ENCODE measurements at regions of chr17 and their contacts with region 1.

Region 1: GRCh38 chr17:1628856-1629646 is 417 bp upstream of the SLC43A2 start:
- DNase-seq: peak; percentile 95
- H3K4me3 Mint-ChIP-seq: peak overlapping the region; percentile 97
- H3K27ac Mint-ChIP-seq: peak overlapping the region; percentile 93
- H3K4me1 Mint-ChIP-seq: peaks cover 25% of the 10 kb centered on the region
- H3K27me3 Mint-ChIP-seq: peaks cover 43% of the 10 kb centered on the region

Region 2: DNA sequence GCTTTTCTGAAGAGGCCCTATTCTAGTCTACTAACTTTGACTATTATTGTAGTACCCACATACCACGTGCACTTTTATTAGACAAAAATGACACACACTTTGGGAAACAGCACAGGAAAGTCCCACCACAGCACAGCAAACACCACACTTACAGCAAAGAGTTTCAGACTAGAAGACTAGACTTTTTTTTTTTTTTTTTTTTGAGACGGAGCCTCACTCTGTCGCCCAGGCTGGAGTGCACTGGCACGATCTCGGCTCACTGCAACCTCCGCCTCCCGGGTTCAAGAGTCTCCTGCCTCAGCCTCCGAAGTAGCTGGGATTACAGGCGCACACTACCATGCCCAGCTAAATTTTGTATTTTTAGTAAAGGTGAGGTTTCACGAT is 249.1 kb before region 1 on chr17:
- intact Hi-C with region 1: loop called (anchors 10 kb)
- DNase-seq: no peak
- H3K4me3 Mint-ChIP-seq: peak overlapping the region; percentile 28
- H3K27ac Mint-ChIP-seq: peak overlapping the region; percentile 46
- H3K4me1 Mint-ChIP-seq: peaks cover 59% of the 10 kb centered on the region
- H3K27me3 Mint-ChIP-seq: no peaks in the 10 kb centered on the region

Region 3: DNA sequence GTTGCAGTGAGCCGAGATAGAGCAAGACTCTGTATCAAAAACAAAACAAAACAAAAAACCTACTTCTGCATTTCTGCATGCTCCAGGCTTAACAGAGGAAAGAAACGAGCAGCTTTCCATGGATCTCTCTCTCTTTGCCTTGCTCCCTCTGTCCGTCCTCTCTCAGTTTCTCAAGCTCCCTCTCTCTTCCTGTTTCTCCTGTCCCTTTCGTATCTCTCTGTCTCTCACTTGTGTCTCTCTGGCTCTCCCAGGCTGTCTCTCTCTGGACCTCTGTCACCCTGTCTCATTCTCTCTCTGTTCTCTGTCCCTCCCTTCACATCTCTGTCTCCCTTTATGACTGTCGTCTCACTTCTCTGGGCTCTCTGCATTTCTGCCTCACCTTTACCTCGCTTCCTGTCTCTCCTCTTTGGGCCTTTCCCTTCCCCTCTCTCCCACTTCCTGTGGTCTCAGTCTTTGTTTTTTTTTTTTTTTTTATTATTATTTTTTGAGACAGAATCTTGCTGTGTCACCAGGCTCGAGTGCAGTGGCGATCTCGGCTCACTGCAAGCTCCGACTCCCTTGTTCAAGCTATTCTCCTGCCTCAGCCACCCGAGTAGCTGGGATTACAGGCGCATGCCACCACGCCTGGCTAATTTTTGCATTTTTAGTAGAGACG is 62.4 kb before region 1 on chr17:
- intact Hi-C with region 1: loop called (anchors 2 kb)
- DNase-seq: peak; percentile 82
- H3K4me3 Mint-ChIP-seq: peak overlapping the region; percentile 82
- H3K27ac Mint-ChIP-seq: peak overlapping the region; percentile 89
- H3K4me1 Mint-ChIP-seq: peaks cover 22% of the 10 kb centered on the region
- H3K27me3 Mint-ChIP-seq: peaks cover 7% of the 10 kb centered on the region

Region 4: DNA sequence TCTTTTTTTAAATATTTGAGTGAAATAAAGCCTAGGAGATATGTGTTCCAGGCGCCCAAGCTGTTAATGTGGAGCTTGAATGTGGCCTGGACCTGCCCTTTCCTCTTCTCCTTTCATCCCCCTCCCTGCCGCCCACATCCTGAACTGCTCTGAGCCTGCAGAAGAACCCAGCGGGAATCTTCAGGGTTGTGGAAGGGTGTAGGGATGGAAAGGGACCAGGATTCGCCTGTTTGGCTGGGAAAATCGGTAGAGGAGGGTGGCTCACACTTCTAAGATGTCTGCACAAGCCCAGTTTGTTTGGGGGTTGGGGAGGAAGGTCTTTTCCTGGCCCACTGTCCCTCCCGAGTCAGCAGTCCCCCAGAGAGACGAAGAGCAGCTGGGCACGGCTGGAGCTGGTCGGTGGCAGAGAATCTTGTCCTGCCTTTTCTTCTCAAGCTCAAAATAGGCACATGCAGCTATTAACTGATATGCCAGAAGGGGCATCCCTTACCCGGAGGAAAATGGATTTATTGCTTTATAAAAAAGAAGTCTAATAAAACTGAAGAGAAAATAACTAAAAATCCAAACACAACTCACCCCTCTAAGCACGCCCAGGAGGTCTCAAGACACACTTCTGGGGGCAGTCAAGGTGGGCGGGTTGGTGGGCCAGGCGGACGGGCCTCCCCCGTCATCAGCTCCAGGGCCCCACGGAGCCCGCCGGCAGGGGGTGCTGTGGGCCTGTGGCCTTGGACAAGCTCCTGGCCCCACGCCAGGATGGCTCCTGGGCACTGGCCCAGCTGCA is 54.9 kb before region 1 on chr17:
- intact Hi-C with region 1: loop called (anchors 1 kb)
- DNase-seq: peak; percentile 90
- H3K4me3 Mint-ChIP-seq: no peak overlapping the region
- H3K27ac Mint-ChIP-seq: no peak overlapping the region
- H3K4me1 Mint-ChIP-seq: peaks cover 8% of the 10 kb centered on the region
- H3K27me3 Mint-ChIP-seq: no peaks in the 10 kb centered on the region

Region 5: GRCh38 chr17:1606352-1607033 is 22.6 kb before region 1 on chr17:
- intact Hi-C with region 1: loop called (anchors 1 kb)
- DNase-seq: no peak
- H3K4me3 Mint-ChIP-seq: peak overlapping the region; percentile 26
- H3K27ac Mint-ChIP-seq: peak overlapping the region; percentile 92
- H3K4me1 Mint-ChIP-seq: peaks cover 21% of the 10 kb centered on the region
- H3K27me3 Mint-ChIP-seq: no peaks in the 10 kb centered on the region

Region 6: GRCh38 chr17:1648963-1649843 is 20.2 kb after region 1 on chr17:
- intact Hi-C with region 1: no loop called
- DNase-seq: peak; percentile 98
- H3K4me3 Mint-ChIP-seq: peak overlapping the region; percentile 77
- H3K27ac Mint-ChIP-seq: peak overlapping the region; percentile 66
- H3K4me1 Mint-ChIP-seq: peaks cover 31% of the 10 kb centered on the region
- H3K27me3 Mint-ChIP-seq: no peaks in the 10 kb centered on the region

Region 7: DNA sequence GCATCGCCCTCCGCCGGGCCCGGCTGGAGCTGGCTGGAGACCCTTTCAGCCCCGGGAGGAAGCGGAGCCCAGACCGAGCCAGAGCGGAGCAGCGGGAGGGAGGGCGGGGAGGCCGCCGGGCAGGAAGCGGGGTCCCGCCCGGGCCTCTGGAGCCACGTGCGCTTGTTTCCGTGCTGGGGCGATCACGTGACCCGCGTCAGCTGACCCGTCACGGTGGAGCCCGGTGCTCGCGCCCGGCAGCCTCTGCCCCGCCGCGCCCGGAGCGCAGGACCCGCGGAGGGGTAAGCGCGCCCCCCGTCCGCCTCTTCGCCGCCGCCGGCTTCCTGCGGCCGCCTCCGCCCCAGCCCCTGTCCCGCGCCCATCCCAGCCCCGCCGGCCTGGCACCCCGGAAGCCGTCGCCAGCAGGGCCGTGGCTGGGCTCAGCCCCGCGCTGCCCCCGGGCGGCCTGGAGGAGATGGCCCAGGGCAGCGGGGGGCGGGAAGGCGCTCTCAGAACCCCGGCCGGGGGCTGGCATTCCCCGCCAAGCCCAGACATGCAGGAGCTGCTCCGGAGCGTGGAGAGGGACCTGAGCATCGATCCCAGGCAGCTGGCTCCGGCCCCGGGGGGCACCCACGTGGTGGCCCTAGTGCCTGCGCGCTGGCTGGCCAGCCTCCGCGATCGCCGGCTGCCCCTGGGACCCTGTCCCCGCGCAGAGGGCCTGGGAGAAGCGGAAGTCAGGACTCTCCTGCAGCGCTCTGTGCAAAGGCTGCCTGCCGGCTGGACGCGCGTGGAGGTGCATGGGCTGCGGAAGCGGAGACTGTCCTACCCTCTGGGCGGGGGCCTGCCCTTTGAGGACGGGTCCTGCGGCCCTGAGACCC is 95.7 kb after region 1 on chr17 and contains the start of gene WDR81:
- intact Hi-C with region 1: no loop called
- DNase-seq: peak; percentile 96
- H3K4me3 Mint-ChIP-seq: peak within 1 kb of the TSS; percentile 82
- H3K27ac Mint-ChIP-seq: peak within 1 kb of the TSS; percentile 83
- H3K4me1 Mint-ChIP-seq: peaks cover 29% of the 10 kb centered on the region
- H3K27me3 Mint-ChIP-seq: no peaks in the 10 kb centered on the region
- total RNA-seq, gene WDR81: 17.6 and 18.3 TPM in 2 replicates